ENCODE measurements at regions of chr19 and their contacts with region 1.

Region 1: GRCh38 chr19:41753936-41754529 is 1.3 kb upstream of the CEACAM6 start:
- DNase-seq: peak; percentile 24 to 57 (median 26)
- ATAC-seq: peak; percentile 95
- H3K4me3 ChIP-seq: no peak overlapping the region
- H3K27ac ChIP-seq: no peak overlapping the region
- H3K4me1 ChIP-seq: no peaks in the 10 kb centered on the region
- H3K27me3 ChIP-seq: peaks cover 0 to 3% of the 10 kb centered on the region in 2 experiments; a peak in 2 of 5 replicates
- CTCF ChIP-seq: peak; percentile 57 to 84 (median 59)
- EP300 ChIP-seq: no peak
- POLR2A ChIP-seq: no peak
- RAD21 ChIP-seq: no peak

Region 2: DNA sequence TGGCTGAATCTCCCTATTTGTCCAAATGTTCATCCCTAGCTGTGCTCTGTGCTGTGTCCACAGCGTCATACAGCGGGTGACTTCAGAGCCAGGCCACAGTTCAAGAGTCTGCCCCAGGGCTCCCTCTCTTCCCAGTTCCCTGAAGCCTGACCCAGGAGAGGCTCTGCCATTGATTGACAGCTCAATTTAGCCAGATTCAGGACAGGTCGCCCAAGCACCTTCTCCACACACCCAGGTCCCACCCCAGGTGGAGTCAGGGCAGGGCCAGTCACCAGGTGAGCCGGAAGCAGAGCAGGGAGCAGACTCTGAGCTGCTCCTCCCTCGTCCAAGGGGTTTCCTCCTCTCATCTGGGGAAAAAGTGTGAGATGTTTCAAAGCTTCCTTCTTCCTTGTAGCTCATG is 71.6 kb before region 1 on chr19:
- CTCF ChIA-PET with region 1: no interaction called
- POLR2A ChIA-PET with region 1: no interaction called
- in situ Hi-C with region 1: no loop called
- intact Hi-C with region 1: no loop called
- DNase-seq: no peak
- ATAC-seq: no peak
- H3K4me3 ChIP-seq: no peak overlapping the region
- H3K27ac ChIP-seq: no peak overlapping the region
- H3K4me1 ChIP-seq: no peaks in the 10 kb centered on the region
- H3K27me3 ChIP-seq: peaks cover 0 to 17% of the 10 kb centered on the region in 2 experiments; a peak in 2 of 5 replicates
- CTCF ChIP-seq: no peak
- EP300 ChIP-seq: no peak
- POLR2A ChIP-seq: no peak
- RAD21 ChIP-seq: no peak

Region 3: DNA sequence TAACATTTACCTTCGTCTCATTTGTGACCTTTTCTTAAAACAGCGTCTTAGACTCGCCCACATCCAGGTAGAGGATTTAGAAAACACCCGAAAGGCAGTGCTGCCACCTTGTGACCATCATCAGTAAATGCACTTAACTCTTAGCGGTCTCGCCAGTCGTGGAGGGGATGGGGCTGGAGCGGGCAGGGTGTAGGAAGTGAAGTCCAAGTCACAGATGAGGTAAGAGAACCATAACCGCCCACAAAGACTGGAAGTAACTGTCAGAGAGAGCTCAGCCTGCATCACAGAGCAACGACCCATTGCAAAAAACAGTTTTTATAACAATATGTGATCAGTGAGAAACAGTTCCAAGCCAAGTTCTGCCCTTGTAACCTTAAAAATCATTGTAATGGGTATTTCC is 31.6 kb after region 1 on chr19:
- CTCF ChIA-PET with region 1: interaction called, 8 read pairs
- POLR2A ChIA-PET with region 1: no interaction called
- in situ Hi-C with region 1: no loop called
- intact Hi-C with region 1: loop called (anchors 1 kb)
- DNase-seq: peak; percentile 83 to 85 (median 84)
- ATAC-seq: peak; percentile 96
- H3K4me3 ChIP-seq: no peak overlapping the region
- H3K27ac ChIP-seq: no peak overlapping the region
- H3K4me1 ChIP-seq: no peaks in the 10 kb centered on the region
- H3K27me3 ChIP-seq: peaks cover 12 to 18% of the 10 kb centered on the region in 2 experiments
- CTCF ChIP-seq: peak; percentile 85 to 87 (median 85)
- EP300 ChIP-seq: no peak
- POLR2A ChIP-seq: no peak
- RAD21 ChIP-seq: peak; percentile 29 to 65; a peak in 3 of 4 replicates

Region 4: DNA sequence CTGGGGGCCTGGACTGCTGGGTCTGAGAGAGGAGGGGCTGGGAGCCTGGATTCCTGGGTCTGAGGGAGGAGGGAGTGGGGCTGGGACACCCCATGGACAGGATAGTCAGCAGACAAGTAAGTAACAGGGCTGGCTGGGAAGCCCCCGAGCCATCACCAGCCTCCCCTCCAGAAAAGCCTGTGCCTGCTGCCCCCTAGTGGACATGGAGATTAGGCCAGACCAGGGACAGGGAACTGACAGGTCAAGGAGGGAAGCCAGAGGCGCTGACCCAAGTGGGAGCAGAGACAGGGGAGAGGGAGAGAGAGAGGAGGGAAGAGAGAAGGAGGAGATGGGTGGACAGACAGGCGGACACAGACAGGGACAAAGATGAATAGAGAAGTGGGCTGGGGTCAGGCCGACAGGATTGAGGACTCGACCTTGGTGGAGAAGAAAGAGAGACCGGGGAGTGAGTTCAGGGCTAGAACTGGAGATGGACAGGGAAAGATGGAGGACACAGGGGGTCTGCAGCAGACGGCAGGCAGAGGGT is 180.9 kb after region 1 on chr19:
- CTCF ChIA-PET with region 1: no interaction called
- POLR2A ChIA-PET with region 1: no interaction called
- in situ Hi-C with region 1: no loop called
- intact Hi-C with region 1: no loop called
- DNase-seq: peak; percentile 74 to 87 (median 77)
- ATAC-seq: peak; percentile 84
- H3K4me3 ChIP-seq: no peak overlapping the region
- H3K27ac ChIP-seq: no peak overlapping the region
- H3K4me1 ChIP-seq: peaks cover 25 to 70% of the 10 kb centered on the region in 2 experiments
- H3K27me3 ChIP-seq: no peaks in the 10 kb centered on the region
- CTCF ChIP-seq: peak; percentile 84 to 93 (median 85)
- EP300 ChIP-seq: no peak
- POLR2A ChIP-seq: no peak
- RAD21 ChIP-seq: peak; percentile 22 to 74